ENCODE measurements at regions of chr22 and their contacts with region 1.

Region 1: GRCh38 chr22:29625090-29625825 is 21.8 kb downstream of the NF2 start:
- DNase-seq: peak; percentile 45
- CTCF ChIP-seq: peak; percentile 77

Region 2: DNA sequence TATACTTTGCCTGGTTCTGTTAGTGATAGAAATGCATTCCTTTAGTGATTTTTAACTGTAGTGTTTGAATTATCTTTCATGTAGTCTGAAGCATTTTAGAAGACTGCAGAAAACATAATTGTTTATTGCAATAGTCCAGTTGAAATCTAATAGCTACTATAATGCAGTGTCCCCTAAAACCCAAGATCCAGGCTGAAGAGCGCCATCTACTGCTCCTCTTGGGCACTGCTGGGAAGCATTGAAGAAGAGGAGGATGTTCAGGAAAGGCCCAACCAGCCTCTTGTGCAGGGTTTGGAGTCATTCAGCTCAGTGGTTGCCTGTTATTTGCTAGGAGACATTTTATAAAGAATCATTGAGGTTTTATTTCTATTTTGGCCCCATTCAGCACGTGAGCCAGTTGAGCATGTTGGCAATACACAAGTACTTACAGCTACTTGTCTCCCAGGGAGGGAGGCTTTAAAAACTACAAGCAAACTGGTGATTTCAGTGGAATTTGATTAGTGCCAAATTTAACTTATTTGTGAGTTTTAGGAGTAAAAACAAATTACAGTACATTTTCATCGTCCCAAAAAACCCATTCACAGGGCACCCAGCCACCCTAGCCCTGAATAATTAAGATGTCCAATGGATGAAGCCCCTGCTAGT is 380.1 kb after region 1 on chr22:
- in situ Hi-C with region 1: loop called (anchors 25 kb)
- DNase-seq: peak; percentile 57
- CTCF ChIP-seq: peak; percentile 88

Measured in GM13976 (cell line).